Activated CD8-positive, alpha-beta memory T cell treated with anti-CD3 and anti-CD28 coated beads, Interleukin-2, amount 10 ng/mL, durations not matched to agents 7 days and 5 days (primary cell): ENCODE measurements at regions of chr21 and their contacts with region 1.

Region 1: GRCh38 chr21:29091032-29091431 is 17.6 kb upstream of the CCT8 start:
- DNase-seq: no peak
- ATAC-seq: peak; percentile 31
- H3K4me3 Mint-ChIP-seq: no peak overlapping the region
- H3K27ac Mint-ChIP-seq: no peak overlapping the region
- H3K4me1 Mint-ChIP-seq: peaks cover 14% of the 10 kb centered on the region
- H3K27me3 Mint-ChIP-seq: no peaks in the 10 kb centered on the region

Region 2: DNA sequence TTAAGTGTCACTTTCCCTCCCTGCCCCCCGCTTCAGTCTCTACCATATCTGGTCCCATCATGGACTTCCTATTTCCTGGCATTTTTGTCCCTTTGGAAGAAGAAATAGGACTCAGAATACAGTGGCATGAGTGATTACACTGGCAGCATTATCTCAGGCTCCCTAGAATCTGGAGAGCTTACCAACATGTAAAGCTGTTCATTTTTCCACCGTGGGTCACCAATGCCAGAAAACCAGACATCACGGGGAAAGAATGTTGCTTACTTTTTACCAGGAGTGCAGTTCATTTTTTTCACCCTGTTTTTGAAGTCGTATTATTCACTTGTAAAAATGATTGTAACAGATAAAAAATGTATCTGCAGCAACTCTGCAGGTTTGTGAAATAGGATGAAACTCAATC is 252.5 kb after region 1 on chr21:
- CTCF ChIA-PET with region 1: interaction called, 12 read pairs
- DNase-seq: no peak
- ATAC-seq: no peak
- H3K4me3 Mint-ChIP-seq: no peak overlapping the region
- H3K27ac Mint-ChIP-seq: no peak overlapping the region
- H3K4me1 Mint-ChIP-seq: peaks cover 36% of the 10 kb centered on the region
- H3K27me3 Mint-ChIP-seq: no peaks in the 10 kb centered on the region

Region 3: DNA sequence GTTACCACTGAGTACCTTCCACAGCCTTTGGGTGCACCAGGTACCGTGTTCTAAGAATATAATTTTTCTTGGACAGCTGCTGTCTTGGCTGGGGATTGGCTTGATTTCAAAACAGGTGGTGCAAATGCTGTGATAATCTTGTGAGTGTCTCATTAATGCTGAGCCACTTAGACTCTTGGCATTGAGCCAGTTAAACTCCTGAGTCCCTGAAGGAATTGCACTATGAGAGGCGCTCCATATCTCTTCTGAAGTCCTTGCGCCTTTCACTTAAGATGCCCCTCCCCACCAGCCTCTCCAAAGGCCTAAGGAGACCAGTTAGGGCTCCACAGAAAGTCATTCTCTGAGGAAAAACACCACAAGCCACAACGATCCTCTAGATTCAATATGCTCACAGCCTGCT is 258.7 kb after region 1 on chr21:
- CTCF ChIA-PET with region 1: interaction called, 12 read pairs
- DNase-seq: no peak
- ATAC-seq: no peak
- H3K4me3 Mint-ChIP-seq: no peak overlapping the region
- H3K27ac Mint-ChIP-seq: no peak overlapping the region
- H3K4me1 Mint-ChIP-seq: peaks cover 13% of the 10 kb centered on the region
- H3K27me3 Mint-ChIP-seq: no peaks in the 10 kb centered on the region